Mammary epithelial cell (primary cell): ENCODE measurements at regions of chr14 and their contacts with region 1.

Region 1: DNA sequence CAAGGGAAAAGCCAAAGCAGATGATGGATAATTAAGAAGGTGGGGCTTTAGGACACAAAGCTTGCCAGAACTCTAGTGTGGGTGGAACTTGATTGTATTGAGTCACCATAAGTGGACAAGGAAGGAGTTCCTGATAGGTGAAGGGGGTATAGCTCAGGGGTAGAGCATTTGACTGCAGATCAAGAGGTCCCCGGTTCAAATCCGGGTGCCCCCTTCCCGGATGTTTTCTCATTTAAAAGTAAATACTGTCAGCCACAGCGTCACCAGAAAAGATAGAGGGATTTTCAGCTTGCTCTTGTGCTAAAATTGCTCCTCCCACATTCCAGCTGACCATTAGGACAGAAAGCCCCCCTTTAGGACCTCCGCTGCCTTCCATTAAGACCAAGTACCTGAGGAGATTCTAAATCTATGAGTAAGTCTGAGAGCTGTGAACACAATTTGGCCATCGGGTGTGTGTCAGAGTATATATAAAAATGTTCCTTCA is 36.6 kb downstream of the DCAF4 start:
- DNase-seq: peak; percentile 89
- H3K4me3 ChIP-seq: no peak overlapping the region
- H3K27ac ChIP-seq: no peak overlapping the region
- H3K4me1 ChIP-seq: peaks cover 21% of the 10 kb centered on the region
- H3K27me3 ChIP-seq: no peaks in the 10 kb centered on the region
- CTCF ChIP-seq: no peak

Region 2: DNA sequence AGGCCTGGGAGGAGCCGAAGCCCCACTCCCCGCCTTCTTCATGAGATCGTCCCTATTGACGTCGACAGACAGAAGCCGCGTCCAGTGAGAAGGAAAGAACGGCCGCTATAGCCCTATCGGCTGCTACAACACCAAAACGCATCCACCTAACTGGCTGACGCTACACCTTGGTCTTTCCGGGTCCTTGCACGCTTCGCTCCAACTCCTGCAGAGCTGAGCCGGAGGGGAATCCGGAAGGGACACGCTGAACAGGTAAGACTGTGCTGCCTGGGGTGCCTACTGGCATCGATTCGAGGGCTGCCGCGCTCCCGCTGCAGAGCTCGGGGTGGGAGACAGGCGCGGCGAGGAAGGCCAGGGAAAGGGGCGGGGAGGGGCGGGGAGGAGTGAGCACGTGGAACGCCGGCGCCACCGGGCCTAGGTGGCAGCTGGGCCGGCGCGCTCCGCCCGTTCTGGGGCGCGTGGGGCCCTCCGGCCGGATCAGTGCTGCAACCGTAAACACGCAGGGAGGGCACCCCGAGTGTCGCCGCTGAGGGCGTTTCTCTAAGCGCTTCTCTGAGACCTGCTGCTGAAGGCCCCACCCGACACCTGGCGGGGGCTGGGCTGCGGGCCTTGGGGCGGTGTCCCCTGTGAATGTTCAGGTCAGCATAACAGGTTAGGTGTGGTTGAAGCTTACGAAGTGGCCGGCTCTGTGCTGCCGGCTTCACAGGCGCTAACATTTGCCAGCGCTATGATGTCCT is 36.4 kb before region 1 on chr14 and contains the start of gene DCAF4:
- CTCF ChIA-PET with region 1: no interaction called
- dilution Hi-C with region 1: no loop called
- in situ Hi-C with region 1: no loop called
- intact Hi-C with region 1: loop called (anchors 2 kb)
- DNase-seq: peak; percentile 99
- H3K4me3 ChIP-seq: peak within 1 kb of the TSS; percentile 76 to 96 (median 77)
- H3K27ac ChIP-seq: peak within 1 kb of the TSS; percentile 93
- H3K4me1 ChIP-seq: peaks cover 12% of the 10 kb centered on the region
- H3K27me3 ChIP-seq: no peaks in the 10 kb centered on the region
- CTCF ChIP-seq: no peak
- total RNA-seq, gene DCAF4: 24.1 to 46.7 TPM

Region 3: GRCh38 chr14:73026845-73027542 is 64.1 kb after region 1 on chr14 and contains the start of gene ZFYVE1:
- CTCF ChIA-PET with region 1: no interaction called
- dilution Hi-C with region 1: no loop called
- in situ Hi-C with region 1: no loop called
- intact Hi-C with region 1: loop called (anchors 1 kb)
- DNase-seq: peak; percentile 99
- H3K4me3 ChIP-seq: peak within 1 kb of the TSS; percentile 73 to 97 (median 79)
- H3K27ac ChIP-seq: peak within 1 kb of the TSS; percentile 75
- H3K4me1 ChIP-seq: peaks cover 10% of the 10 kb centered on the region
- H3K27me3 ChIP-seq: no peaks in the 10 kb centered on the region
- CTCF ChIP-seq: no peak
- total RNA-seq, gene ZFYVE1: 20.6 to 32.7 TPM

Region 4: GRCh38 chr14:73058224-73058921 is 95.5 kb after region 1 on chr14 and contains the start of gene RBM25:
- CTCF ChIA-PET with region 1: no interaction called
- dilution Hi-C with region 1: no loop called
- in situ Hi-C with region 1: no loop called
- intact Hi-C with region 1: loop called (anchors 1 kb)
- DNase-seq: peak; percentile 98
- H3K4me3 ChIP-seq: peak within 1 kb of the TSS; percentile 90 to 92 (median 91)
- H3K27ac ChIP-seq: peak within 1 kb of the TSS; percentile 96
- H3K4me1 ChIP-seq: peaks cover 14% of the 10 kb centered on the region
- H3K27me3 ChIP-seq: no peaks in the 10 kb centered on the region
- CTCF ChIP-seq: no peak
- total RNA-seq, gene RBM25: 27.2 to 87.7 TPM